MCF 10A (cell line): ENCODE measurements at regions of chr1 and their contacts with region 1.

Region 1: DNA sequence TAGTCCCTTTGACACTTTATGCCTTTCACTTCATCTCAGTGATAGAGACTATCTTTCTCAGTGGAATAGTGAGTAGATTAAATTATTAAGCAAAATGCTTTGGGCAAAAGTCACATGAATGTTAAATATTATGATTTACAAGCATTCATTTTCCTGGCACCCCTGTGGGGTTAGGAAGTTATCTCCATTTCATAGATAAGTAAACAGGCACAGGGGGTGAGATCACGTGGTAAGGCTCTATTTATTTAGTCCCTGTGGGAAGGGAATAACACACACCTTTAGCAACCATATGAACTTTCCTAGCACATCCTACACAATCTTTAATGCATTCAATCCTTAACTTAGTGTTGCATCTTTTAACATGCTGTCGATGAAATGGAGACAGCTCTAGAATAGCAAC is 12.3 kb downstream of the PSMB2 start:
- DNase-seq: no peak
- H3K4me3 Mint-ChIP-seq: no peak overlapping the region
- H3K27ac Mint-ChIP-seq: no peak overlapping the region
- H3K4me1 Mint-ChIP-seq: no peaks in the 10 kb centered on the region
- H3K27me3 Mint-ChIP-seq: no peaks in the 10 kb centered on the region
- CTCF ChIP-seq: no peak

Region 2: DNA sequence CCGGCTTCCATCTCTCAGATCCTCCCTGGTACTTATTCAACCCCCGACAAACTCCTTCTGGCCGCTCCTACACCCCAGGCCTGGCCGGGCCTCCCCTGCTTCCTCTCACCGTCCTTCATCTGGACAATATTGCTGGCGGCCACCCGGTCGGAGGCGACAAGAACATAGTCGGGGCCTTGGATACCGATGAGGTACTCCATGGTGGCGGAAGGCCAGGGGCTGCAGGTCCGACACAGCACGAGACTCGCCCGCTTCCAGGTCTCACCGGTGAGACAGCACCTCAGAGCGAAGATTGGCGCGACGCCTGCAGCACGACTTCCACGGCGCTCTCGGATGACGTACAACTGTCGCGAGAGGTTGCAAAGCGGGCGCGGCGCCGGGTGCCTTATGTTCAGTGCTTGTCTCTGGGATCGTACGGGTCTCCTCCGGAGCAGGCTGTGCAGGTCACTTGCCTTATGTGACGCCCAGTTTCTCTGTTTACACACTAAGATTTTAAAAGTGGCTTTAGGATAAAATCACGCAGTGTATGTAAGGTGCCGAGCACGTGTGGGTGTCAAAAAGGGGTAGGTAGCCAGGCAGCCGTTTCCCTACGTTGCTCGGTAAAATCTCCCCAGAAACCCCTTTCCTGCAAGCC is 12.3 kb after region 1 on chr1 and contains the start of gene PSMB2:
- CTCF ChIA-PET with region 1: interaction called, 4 read pairs
- POLR2A ChIA-PET with region 1: interaction called, 11 read pairs
- intact Hi-C with region 1: no loop called
- DNase-seq: peak; percentile 96
- H3K4me3 Mint-ChIP-seq: peak within 1 kb of the TSS; percentile 99
- H3K27ac Mint-ChIP-seq: peak within 1 kb of the TSS; percentile 100
- H3K4me1 Mint-ChIP-seq: peaks cover 7% of the 10 kb centered on the region
- H3K27me3 Mint-ChIP-seq: peaks cover 12% of the 10 kb centered on the region
- CTCF ChIP-seq: no peak
- total RNA-seq, gene PSMB2: 82.6 and 93.9 TPM in 2 replicates

Region 3: GRCh38 chr1:35668506-35668905 is 39.5 kb after region 1 on chr1:
- CTCF ChIA-PET with region 1: no interaction called
- POLR2A ChIA-PET with region 1: no interaction called
- intact Hi-C with region 1: no loop called
- DNase-seq: no peak
- H3K4me3 Mint-ChIP-seq: no peak overlapping the region
- H3K27ac Mint-ChIP-seq: no peak overlapping the region
- H3K4me1 Mint-ChIP-seq: no peaks in the 10 kb centered on the region
- H3K27me3 Mint-ChIP-seq: peaks cover 43% of the 10 kb centered on the region
- CTCF ChIP-seq: no peak